CD4-positive, alpha-beta T cell (primary cell): ENCODE measurements at regions of chr22 and their contacts with region 1.

Region 1: GRCh38 chr22:36379593-36380361 is 8.0 kb downstream of the MYH9 start:
- DNase-seq: peak in 12 of 14 experiments; percentile 38 to 89 (median 63)
- ATAC-seq: peak; percentile 37
- H3K4me3 ChIP-seq: peak overlapping the region; percentile 31
- H3K4me3 Mint-ChIP-seq: peak overlapping the region; percentile 70
- H3K27ac ChIP-seq: peak overlapping the region; percentile 85 to 95
- H3K27ac Mint-ChIP-seq: peak overlapping the region; percentile 93
- H3K4me1 ChIP-seq: peaks cover 98% of the 10 kb centered on the region
- H3K4me1 Mint-ChIP-seq: peaks cover 85% of the 10 kb centered on the region
- H3K27me3 ChIP-seq: no peaks in the 10 kb centered on the region
- H3K27me3 Mint-ChIP-seq: no peaks in the 10 kb centered on the region
- CTCF ChIP-seq: no peak

Region 2: GRCh38 chr22:35998748-35999147 is 381.0 kb before region 1 on chr22:
- CTCF ChIA-PET with region 1: no interaction called
- POLR2A ChIA-PET with region 1: no interaction called
- intact Hi-C with region 1: no loop called
- DNase-seq: no peak
- ATAC-seq: no peak
- H3K4me3 ChIP-seq: no peak overlapping the region
- H3K4me3 Mint-ChIP-seq: no peak overlapping the region
- H3K27ac ChIP-seq: no peak overlapping the region
- H3K27ac Mint-ChIP-seq: no peak overlapping the region
- H3K4me1 ChIP-seq: no peaks in the 10 kb centered on the region
- H3K4me1 Mint-ChIP-seq: no peaks in the 10 kb centered on the region
- H3K27me3 ChIP-seq: no peaks in the 10 kb centered on the region
- H3K27me3 Mint-ChIP-seq: no peaks in the 10 kb centered on the region
- CTCF ChIP-seq: no peak

Region 3: DNA sequence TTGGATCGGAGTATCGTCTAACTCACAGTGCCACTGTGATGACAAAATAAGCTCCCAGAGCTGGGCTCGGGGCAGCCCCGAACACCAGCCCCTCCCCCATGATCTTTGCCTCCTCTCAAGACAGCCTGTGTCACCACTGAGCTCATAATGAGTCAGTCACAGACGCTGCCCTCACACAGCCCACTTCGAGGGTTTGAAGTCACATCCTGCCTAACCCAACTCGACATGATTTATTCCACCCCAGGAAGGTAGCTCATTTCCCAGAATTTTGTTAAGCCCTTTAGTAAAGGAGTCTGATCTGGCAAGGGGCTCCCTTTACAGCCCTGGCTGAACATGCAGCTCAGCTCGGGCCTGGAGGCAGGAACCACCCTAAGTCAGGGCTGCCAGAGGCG is 14.8 kb before region 1 on chr22:
- CTCF ChIA-PET with region 1: interaction called, 8 read pairs
- POLR2A ChIA-PET with region 1: interaction called, 1,847 read pairs
- intact Hi-C with region 1: loop called in 1 of 2 experiments (anchors 1 kb)
- DNase-seq: peak; percentile 73 to 96 (median 84)
- ATAC-seq: peak; percentile 90
- H3K4me3 ChIP-seq: no peak overlapping the region
- H3K4me3 Mint-ChIP-seq: peak overlapping the region; percentile 81
- H3K27ac ChIP-seq: peak overlapping the region; percentile 84 to 91
- H3K27ac Mint-ChIP-seq: peak overlapping the region; percentile 93
- H3K4me1 ChIP-seq: peaks cover 99% of the 10 kb centered on the region
- H3K4me1 Mint-ChIP-seq: peaks cover 96% of the 10 kb centered on the region
- H3K27me3 ChIP-seq: no peaks in the 10 kb centered on the region
- H3K27me3 Mint-ChIP-seq: no peaks in the 10 kb centered on the region
- CTCF ChIP-seq: no peak

Region 4: DNA sequence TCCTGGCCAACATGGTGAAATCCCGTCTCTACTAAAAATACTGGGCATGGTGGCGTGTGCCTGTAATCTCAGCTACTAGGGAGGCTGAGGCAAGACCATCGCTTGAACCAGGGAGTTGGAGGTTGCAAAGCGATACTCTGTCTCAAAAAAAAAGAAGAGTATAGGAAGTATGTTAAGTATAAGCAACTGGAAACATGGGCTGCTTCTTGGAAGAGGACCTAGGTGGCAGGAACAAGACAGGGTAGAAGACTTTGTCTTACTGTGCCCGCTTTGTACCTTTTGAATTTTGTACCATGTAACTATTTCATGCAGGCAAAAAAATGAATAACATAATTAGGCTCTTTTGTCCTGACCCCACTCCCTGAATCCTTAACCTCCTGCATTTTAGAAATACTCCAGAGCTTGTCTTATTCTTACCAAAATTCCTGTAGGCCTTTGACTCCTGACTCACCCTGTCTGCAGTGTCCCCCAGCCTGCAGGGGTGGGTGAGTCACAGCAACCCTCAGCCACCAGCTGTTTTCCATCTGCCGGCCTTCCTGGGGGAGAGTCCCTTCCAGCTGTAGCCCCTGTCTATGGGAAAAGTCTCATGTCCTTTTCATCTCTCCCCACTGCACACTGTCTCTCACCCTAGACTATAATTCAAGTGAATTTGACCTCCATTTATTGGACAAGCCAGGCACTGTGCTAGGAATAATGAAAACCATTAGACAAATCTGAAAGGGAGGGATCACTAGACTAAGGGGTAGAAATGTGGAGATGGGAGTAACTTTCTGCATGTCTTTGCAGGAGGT is 59.9 kb after region 1 on chr22:
- CTCF ChIA-PET with region 1: interaction called, 7 read pairs
- POLR2A ChIA-PET with region 1: interaction called, 11 read pairs
- intact Hi-C with region 1: no loop called
- DNase-seq: peak in 2 of 14 experiments; percentile 26 to 35
- ATAC-seq: no peak
- H3K4me3 ChIP-seq: no peak overlapping the region
- H3K4me3 Mint-ChIP-seq: no peak overlapping the region
- H3K27ac ChIP-seq: no peak overlapping the region
- H3K27ac Mint-ChIP-seq: no peak overlapping the region
- H3K4me1 ChIP-seq: peaks cover 36% of the 10 kb centered on the region
- H3K4me1 Mint-ChIP-seq: peaks cover 39% of the 10 kb centered on the region
- H3K27me3 ChIP-seq: no peaks in the 10 kb centered on the region
- H3K27me3 Mint-ChIP-seq: no peaks in the 10 kb centered on the region
- CTCF ChIP-seq: no peak

Region 5: GRCh38 chr22:36449596-36450175 is 69.9 kb after region 1 on chr22:
- CTCF ChIA-PET with region 1: interaction called, 4 read pairs
- POLR2A ChIA-PET with region 1: interaction called, 29 read pairs
- intact Hi-C with region 1: loop called in 1 of 2 experiments (anchors 2 kb)
- DNase-seq: peak in 1 of 14 experiments; percentile 35
- ATAC-seq: no peak
- H3K4me3 ChIP-seq: no peak overlapping the region
- H3K4me3 Mint-ChIP-seq: no peak overlapping the region
- H3K27ac ChIP-seq: peak overlapping the region in 1 of 2 donors; percentile 5
- H3K27ac Mint-ChIP-seq: peak overlapping the region; percentile 93
- H3K4me1 ChIP-seq: peaks cover 87% of the 10 kb centered on the region
- H3K4me1 Mint-ChIP-seq: peaks cover 56% of the 10 kb centered on the region
- H3K27me3 ChIP-seq: no peaks in the 10 kb centered on the region
- H3K27me3 Mint-ChIP-seq: no peaks in the 10 kb centered on the region
- CTCF ChIP-seq: no peak